ENCODE measurements at regions of chr4 and their contacts with region 1.

Region 1: DNA sequence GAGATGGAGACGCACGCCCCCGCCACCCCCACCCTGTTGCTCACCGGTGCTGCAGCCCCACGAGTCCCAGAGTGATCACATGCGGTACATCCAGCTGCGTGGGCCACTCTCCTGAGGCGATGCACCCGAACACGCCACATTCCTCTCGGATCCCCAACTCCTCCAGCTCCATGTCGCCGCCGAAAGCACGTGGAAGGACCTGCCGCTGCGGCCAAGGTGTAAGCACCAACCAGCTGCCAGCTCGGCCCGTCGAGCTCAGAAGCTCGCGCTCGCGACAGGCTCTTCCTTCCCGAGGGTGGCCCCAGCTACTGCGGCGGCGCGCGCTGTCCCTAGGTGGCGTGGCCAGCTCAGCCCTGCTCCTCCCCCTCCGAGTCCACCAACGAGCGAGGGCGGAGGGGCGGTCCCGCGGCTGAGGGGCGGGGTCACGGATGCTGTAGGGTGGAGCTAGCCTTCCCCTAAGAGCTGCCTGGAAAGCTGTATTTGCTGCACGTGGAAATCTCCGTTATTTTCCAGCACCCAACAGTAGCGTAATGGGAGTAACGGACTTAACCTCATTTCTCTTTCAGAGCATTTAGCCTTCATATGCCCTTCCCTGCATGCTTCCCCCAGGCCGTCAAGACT is at the start of gene PPAT:
- DNase-seq: peak; percentile 98
- ATAC-seq: peak; percentile 86
- H3K4me3 Mint-ChIP-seq: peak within 1 kb of the TSS; percentile 90
- H3K27ac Mint-ChIP-seq: peak within 1 kb of the TSS; percentile 97
- H3K4me1 Mint-ChIP-seq: peaks cover 37% of the 10 kb centered on the region
- H3K27me3 Mint-ChIP-seq: no peaks in the 10 kb centered on the region
- CTCF ChIP-seq: no peak
- total RNA-seq, gene PPAT: 11.7 and 12.9 TPM in 2 replicates

Region 2: DNA sequence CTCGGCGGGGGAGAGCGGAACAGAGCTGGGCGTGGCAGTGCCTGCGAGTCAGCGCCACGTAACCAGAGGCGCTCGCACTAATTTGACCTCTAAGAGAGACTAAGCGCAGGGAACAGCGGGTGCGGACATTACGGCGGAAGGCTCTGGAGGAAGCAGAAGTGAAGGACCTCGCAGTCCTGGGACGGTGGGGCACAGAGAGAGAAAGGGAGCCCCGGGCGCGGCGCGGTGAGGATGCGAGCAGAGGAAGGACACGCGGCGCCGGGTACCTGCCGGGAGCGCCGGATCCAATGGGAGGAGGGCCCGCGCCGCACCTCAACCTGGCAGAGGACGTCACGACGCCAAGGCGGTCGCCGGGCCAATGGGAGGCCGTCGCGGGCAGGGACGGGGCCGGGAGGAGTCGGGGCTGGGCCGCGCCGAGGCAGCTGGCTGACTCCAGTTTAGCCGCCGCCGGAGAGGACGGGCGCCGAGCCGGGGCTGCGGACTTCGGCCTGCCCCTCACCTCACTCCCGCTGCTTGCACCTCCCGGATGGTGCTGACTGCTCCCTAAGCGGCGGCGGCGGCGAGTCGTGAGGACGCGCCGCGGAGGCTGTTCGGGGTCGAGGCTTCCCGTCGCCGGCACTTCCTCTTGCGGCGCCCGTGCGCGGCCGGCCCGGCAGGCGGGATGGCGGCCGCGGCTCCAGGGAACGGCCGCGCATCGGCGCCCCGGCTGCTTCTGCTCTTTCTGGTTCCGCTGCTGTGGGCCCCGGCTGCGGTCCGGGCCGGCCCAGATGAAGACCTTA is 1039.7 kb before region 1 on chr4 and contains the start of gene TMEM165:
- CTCF ChIA-PET with region 1: no interaction called
- POLR2A ChIA-PET with region 1: interaction called, 4 read pairs
- intact Hi-C with region 1: loop called (anchors 1 kb)
- DNase-seq: peak; percentile 89
- ATAC-seq: peak; percentile 92
- H3K4me3 Mint-ChIP-seq: peak within 1 kb of the TSS; percentile 91
- H3K27ac Mint-ChIP-seq: peak within 1 kb of the TSS; percentile 95
- H3K4me1 Mint-ChIP-seq: peaks cover 42% of the 10 kb centered on the region
- H3K27me3 Mint-ChIP-seq: no peaks in the 10 kb centered on the region
- CTCF ChIP-seq: no peak
- total RNA-seq, gene TMEM165: 80.3 and 90.2 TPM in 2 replicates

Region 3: DNA sequence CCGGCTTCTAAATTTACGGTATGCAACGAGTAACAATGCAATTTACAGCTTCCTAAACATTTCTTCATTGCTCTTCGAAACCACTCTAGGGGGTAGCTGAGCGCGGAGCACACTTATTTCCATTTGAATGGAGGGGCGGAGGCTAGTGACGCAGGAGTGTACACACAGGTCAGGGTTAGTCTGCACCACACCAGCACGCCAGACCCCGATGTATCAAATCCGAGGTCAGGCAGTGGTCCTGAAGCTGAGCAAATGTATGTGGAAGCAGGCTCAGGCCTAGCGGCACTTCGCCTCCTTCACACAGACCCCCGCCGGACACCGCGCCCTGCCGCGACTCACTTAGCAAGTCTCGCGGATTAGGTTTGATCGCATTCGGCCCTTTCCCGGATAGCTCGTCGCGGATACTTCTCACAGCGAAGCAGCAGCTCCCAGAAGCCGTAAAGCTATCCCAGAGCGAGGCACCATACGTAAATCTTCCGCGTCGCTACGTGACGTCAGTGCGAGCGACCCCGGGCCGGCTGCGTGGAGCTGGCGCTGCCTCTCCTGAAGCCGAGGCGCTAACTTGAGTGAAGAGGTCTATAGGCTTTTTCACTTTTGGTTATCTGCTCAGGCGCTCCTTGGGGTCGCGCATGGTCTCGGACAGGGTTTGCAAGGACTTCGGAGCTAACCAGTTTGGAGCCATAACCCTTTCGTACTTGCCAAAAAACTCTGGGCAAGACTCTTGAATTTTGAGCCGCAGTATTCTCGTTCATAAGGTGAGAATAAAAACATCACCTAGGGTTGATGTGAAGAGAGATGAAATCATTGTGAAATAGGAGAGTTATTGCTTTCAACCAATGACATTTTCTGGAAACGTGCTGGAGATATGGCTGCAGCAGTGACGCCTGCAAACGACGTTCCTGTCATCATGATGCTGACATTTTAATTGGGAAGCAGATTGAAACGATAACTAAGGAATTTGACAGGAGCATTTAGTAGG is 48.1 kb before region 1 on chr4 and contains the start of gene AASDH:
- CTCF ChIA-PET with region 1: interaction called, 7 read pairs
- POLR2A ChIA-PET with region 1: interaction called, 95 read pairs
- intact Hi-C with region 1: loop called (anchors 1 kb)
- DNase-seq: peak; percentile 96
- ATAC-seq: peak; percentile 90
- H3K4me3 Mint-ChIP-seq: peak within 1 kb of the TSS; percentile 93
- H3K27ac Mint-ChIP-seq: peak within 1 kb of the TSS; percentile 99
- H3K4me1 Mint-ChIP-seq: peaks cover 27% of the 10 kb centered on the region
- H3K27me3 Mint-ChIP-seq: no peaks in the 10 kb centered on the region
- CTCF ChIP-seq: no peak
- total RNA-seq, gene AASDH: 12.8 and 14.2 TPM in 2 replicates

Region 4: GRCh38 chr4:56445699-56446098 is 10.3 kb after region 1 on chr4:
- CTCF ChIA-PET with region 1: no interaction called
- POLR2A ChIA-PET with region 1: interaction called, 10 read pairs
- intact Hi-C with region 1: no loop called
- DNase-seq: no peak
- ATAC-seq: no peak
- H3K4me3 Mint-ChIP-seq: no peak overlapping the region
- H3K27ac Mint-ChIP-seq: no peak overlapping the region
- H3K4me1 Mint-ChIP-seq: no peaks in the 10 kb centered on the region
- H3K27me3 Mint-ChIP-seq: no peaks in the 10 kb centered on the region
- CTCF ChIP-seq: no peak

Region 5: GRCh38 chr4:56530269-56531148 is 95.1 kb after region 1 on chr4:
- CTCF ChIA-PET with region 1: no interaction called
- POLR2A ChIA-PET with region 1: interaction called, 3 read pairs
- intact Hi-C with region 1: loop called (anchors 1 kb)
- DNase-seq: peak; percentile 72
- ATAC-seq: peak; percentile 99
- H3K4me3 Mint-ChIP-seq: peak overlapping the region; percentile 68
- H3K27ac Mint-ChIP-seq: no peak overlapping the region
- H3K4me1 Mint-ChIP-seq: peaks cover 4% of the 10 kb centered on the region
- H3K27me3 Mint-ChIP-seq: peaks cover 12% of the 10 kb centered on the region
- CTCF ChIP-seq: no peak

Region 6: DNA sequence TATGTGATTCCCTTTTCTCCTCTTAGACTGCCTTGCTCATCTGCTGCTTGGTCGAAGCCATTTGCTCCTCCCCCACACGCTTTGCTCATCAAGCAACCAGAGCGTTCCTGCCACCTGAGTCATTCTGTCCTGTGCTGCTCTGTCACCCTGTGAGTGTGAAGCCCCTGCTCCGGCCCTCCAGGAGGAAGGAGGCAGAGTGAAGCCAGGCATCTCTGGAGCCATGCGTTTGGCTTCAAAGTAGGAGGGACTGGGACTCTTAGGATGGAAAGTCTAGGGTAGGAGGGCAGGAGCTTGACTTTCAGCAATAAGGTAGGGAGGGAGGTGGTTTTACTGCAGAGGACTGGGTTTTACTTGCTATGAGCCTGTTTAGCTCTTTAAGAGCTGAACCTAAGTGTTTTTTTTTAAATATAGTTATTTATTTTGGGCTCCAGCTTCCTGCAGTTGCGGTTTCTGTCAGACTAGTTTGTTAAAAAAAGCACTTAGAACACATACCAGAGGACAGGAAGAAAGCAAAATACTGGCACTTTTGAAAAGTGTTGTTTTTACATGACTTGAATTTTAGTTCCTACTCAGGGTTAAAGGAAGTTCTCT is 322.5 kb after region 1 on chr4:
- CTCF ChIA-PET with region 1: no interaction called
- POLR2A ChIA-PET with region 1: interaction called, 3 read pairs
- intact Hi-C with region 1: loop called (anchors 5 kb)
- DNase-seq: peak; percentile 55
- ATAC-seq: peak; percentile 96
- H3K4me3 Mint-ChIP-seq: peak overlapping the region; percentile 81
- H3K27ac Mint-ChIP-seq: peak overlapping the region; percentile 96
- H3K4me1 Mint-ChIP-seq: peaks cover 63% of the 10 kb centered on the region
- H3K27me3 Mint-ChIP-seq: no peaks in the 10 kb centered on the region
- CTCF ChIP-seq: no peak

Region 7: GRCh38 chr4:56907489-56908205 is 472.2 kb after region 1 on chr4 and contains the start of gene REST:
- CTCF ChIA-PET with region 1: no interaction called
- POLR2A ChIA-PET with region 1: interaction called, 32 read pairs
- intact Hi-C with region 1: loop called (anchors 1 kb)
- DNase-seq: peak; percentile 90
- ATAC-seq: peak; percentile 59
- H3K4me3 Mint-ChIP-seq: peak within 1 kb of the TSS; percentile 91
- H3K27ac Mint-ChIP-seq: peak within 1 kb of the TSS; percentile 77
- H3K4me1 Mint-ChIP-seq: peaks cover 41% of the 10 kb centered on the region
- H3K27me3 Mint-ChIP-seq: no peaks in the 10 kb centered on the region
- CTCF ChIP-seq: no peak
- total RNA-seq, gene REST: 48.3 and 49.1 TPM in 2 replicates